ENCODE measurements at regions of chr7 and their contacts with region 1.

Region 1: GRCh38 chr7:129367700-129368388 is 66.4 kb upstream of the STRIP2 start:
- H3K4me3 ChIP-seq: no peak overlapping the region
- H3K27ac ChIP-seq: no peak overlapping the region
- H3K4me1 ChIP-seq: 0 out of 2 replicates have a peak, but pooled peaks cover 4% of the 10 kb centered on the region
- CTCF ChIP-seq: peak; percentile 67

Region 2: DNA sequence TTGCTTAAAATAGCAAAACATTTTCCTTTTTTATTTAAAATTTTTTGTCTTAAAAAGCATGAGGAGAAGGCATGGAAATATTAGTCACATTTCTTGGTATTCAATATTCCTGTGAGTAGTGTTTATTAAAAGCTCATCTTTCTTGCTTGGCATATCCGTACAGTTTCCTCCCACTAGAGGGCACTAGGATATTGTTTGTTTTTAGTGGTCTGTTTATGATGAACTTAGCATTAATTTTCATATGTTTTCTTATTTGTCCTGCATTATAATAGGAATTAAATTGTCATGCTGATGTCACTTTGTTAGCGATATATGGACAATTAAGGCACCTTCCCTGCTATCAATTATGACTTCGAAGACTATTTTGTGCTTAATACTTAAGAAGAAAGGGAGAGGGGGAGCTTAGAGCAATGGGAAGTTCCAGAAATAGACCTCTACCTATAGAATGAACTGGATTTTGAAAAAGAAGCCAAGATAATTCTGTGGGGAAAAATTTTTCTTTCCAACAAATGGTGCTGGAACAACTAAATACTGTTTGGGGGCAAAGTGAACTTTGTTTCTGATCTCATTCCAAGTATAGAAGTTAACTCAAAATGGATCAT is 24.6 kb before region 1 on chr7:
- CTCF ChIA-PET with region 1: interaction called, 25 read pairs
- POLR2A ChIA-PET with region 1: no interaction called
- H3K4me3 ChIP-seq: no peak overlapping the region
- H3K27ac ChIP-seq: no peak overlapping the region
- H3K4me1 ChIP-seq: no peaks in the 10 kb centered on the region
- CTCF ChIP-seq: peak; percentile 23; the same call in 1 of the 2 replicates

Region 3: DNA sequence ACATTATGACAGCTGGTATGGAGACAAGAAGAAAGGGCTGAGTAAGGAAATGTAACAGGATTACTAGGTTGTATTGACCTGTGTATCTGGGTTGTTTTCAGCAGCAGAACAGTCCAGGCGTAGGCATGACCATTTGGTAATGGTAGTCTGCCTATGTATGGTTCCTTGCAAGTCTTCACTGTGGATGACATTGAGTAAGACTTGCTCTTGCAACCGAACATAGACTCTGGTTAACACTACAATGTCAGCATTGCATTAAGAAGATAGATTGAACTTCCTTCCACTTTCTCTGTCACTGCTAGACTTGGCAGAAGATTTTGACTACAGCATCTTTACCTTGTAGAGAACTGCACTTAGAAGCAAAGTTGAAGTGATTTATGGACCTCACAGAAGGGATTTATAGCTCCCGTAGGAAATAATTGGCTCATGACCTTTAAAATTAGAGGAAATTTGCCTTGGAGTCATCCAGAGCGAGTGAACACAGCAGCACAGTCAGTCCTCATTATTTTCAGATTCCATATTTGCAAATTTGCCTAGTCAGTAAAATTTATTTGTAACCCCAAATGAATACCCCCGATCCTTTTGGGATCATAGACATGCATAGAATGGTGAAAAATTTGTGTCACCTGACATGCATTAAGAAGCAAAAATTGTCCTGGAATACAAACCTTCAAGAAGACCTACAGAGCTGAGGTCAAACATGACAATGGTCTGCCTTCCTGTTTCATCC is 13.3 kb before region 1 on chr7:
- CTCF ChIA-PET with region 1: interaction called, 17 read pairs
- POLR2A ChIA-PET with region 1: no interaction called
- H3K4me3 ChIP-seq: no peak overlapping the region
- H3K27ac ChIP-seq: no peak overlapping the region
- H3K4me1 ChIP-seq: no peaks in the 10 kb centered on the region; the same call in 1 of the 2 replicates
- CTCF ChIP-seq: no peak

Region 4: GRCh38 chr7:129389829-129390228 is 22.0 kb after region 1 on chr7:
- CTCF ChIA-PET with region 1: interaction called, 23 read pairs
- POLR2A ChIA-PET with region 1: no interaction called
- H3K4me3 ChIP-seq: no peak overlapping the region
- H3K27ac ChIP-seq: no peak overlapping the region
- H3K4me1 ChIP-seq: no peaks in the 10 kb centered on the region
- CTCF ChIP-seq: no peak

Region 5: GRCh38 chr7:129468087-129468486 is 100.2 kb after region 1 on chr7:
- CTCF ChIA-PET with region 1: interaction called, 74 read pairs
- POLR2A ChIA-PET with region 1: no interaction called
- H3K4me3 ChIP-seq: no peak overlapping the region
- H3K27ac ChIP-seq: no peak overlapping the region
- H3K4me1 ChIP-seq: no peaks in the 10 kb centered on the region
- CTCF ChIP-seq: no peak

Region 6: DNA sequence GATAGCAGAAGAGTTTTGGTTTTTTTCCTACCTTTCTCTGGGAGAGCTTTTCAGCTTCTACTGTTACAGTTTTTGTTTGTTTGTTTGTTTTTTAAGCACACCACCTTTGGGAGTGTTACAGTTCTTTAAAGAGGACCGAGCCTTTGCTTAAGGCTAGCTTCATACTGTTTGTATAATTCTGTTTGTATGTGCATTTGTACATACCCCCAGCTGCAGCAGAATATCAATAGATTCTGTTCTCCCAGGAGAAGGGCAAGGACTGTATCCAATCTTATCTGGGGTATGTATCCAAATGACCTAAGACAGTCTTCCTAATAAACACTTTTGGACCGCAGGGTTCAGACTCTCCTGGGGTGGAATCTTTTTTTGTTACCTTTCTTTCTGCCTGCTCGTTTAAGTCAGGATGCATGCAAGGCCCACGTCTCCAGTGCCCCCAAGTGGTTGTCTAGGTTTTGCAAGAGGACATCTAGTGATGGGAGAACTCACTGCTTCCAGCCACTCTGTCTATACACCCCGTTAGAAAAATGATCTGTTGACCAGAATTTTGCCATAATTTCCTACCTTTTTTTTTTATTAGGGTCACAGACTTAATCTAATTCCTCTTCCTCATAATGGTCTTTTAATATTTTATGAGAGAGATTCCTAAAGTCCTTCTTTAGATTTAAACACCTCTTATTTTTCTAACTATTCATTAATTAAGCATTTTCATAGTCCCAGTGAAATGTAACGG is 267.6 kb after region 1 on chr7:
- CTCF ChIA-PET with region 1: interaction called, 13 read pairs
- POLR2A ChIA-PET with region 1: no interaction called
- H3K4me3 ChIP-seq: no peak overlapping the region
- H3K27ac ChIP-seq: no peak overlapping the region
- H3K4me1 ChIP-seq: peaks cover 6% of the 10 kb centered on the region; the same call in 1 of the 2 replicates
- CTCF ChIP-seq: peak; percentile 59; the same call in 1 of the 2 replicates

Region 7: GRCh38 chr7:129644634-129645230 is 276.9 kb after region 1 on chr7:
- CTCF ChIA-PET with region 1: interaction called, 18 read pairs
- POLR2A ChIA-PET with region 1: no interaction called
- H3K4me3 ChIP-seq: no peak overlapping the region
- H3K27ac ChIP-seq: no peak overlapping the region
- H3K4me1 ChIP-seq: 0 out of 2 replicates have a peak, but pooled peaks cover 5% of the 10 kb centered on the region
- CTCF ChIP-seq: no peak